ENCODE measurements at regions of chr6 and their contacts with region 1.

Region 1: GRCh38 chr6:144582939-144583613 is 297.9 kb downstream of the UTRN start:
- DNase-seq: peak in 8 of 14 experiments; percentile 2 to 81 (median 34)
- ATAC-seq: peak; percentile 84
- H3K4me3 ChIP-seq: peak overlapping the region; percentile 44
- H3K4me3 Mint-ChIP-seq: peak overlapping the region; percentile 82
- H3K27ac ChIP-seq: peak overlapping the region; percentile 9 to 19
- H3K27ac Mint-ChIP-seq: peak overlapping the region; percentile 72
- H3K4me1 ChIP-seq: peaks cover 5% of the 10 kb centered on the region
- H3K4me1 Mint-ChIP-seq: peaks cover 40% of the 10 kb centered on the region
- H3K27me3 ChIP-seq: no peaks in the 10 kb centered on the region
- H3K27me3 Mint-ChIP-seq: no peaks in the 10 kb centered on the region
- CTCF ChIP-seq: no peak

Region 2: GRCh38 chr6:144349690-144350527 is 233.2 kb before region 1 on chr6:
- CTCF ChIA-PET with region 1: no interaction called
- POLR2A ChIA-PET with region 1: no interaction called
- intact Hi-C with region 1: no loop called
- DNase-seq: peak in 4 of 14 experiments; percentile 19 to 71 (median 62)
- ATAC-seq: peak; percentile 65
- H3K4me3 ChIP-seq: peak overlapping the region; percentile 42
- H3K4me3 Mint-ChIP-seq: peak overlapping the region; percentile 85
- H3K27ac ChIP-seq: peak overlapping the region; percentile 81 to 82
- H3K27ac Mint-ChIP-seq: peak overlapping the region; percentile 89
- H3K4me1 ChIP-seq: peaks cover 83% of the 10 kb centered on the region
- H3K4me1 Mint-ChIP-seq: peaks cover 86% of the 10 kb centered on the region
- H3K27me3 ChIP-seq: no peaks in the 10 kb centered on the region
- H3K27me3 Mint-ChIP-seq: no peaks in the 10 kb centered on the region
- CTCF ChIP-seq: no peak

Region 3: GRCh38 chr6:144730088-144730645 is 147.1 kb after region 1 on chr6:
- CTCF ChIA-PET with region 1: no interaction called
- POLR2A ChIA-PET with region 1: no interaction called
- intact Hi-C with region 1: loop called in 1 of 2 experiments (anchors 10 kb)
- DNase-seq: no peak
- ATAC-seq: no peak
- H3K4me3 ChIP-seq: no peak overlapping the region
- H3K4me3 Mint-ChIP-seq: no peak overlapping the region
- H3K27ac ChIP-seq: no peak overlapping the region
- H3K27ac Mint-ChIP-seq: no peak overlapping the region
- H3K4me1 ChIP-seq: no peaks in the 10 kb centered on the region
- H3K4me1 Mint-ChIP-seq: peaks cover 25% of the 10 kb centered on the region
- H3K27me3 ChIP-seq: no peaks in the 10 kb centered on the region
- H3K27me3 Mint-ChIP-seq: no peaks in the 10 kb centered on the region
- CTCF ChIP-seq: no peak

Region 4: GRCh38 chr6:144744720-144745119 is 161.6 kb after region 1 on chr6:
- CTCF ChIA-PET with region 1: no interaction called
- POLR2A ChIA-PET with region 1: no interaction called
- intact Hi-C with region 1: loop called (anchors 10 kb)
- DNase-seq: no peak
- ATAC-seq: no peak
- H3K4me3 ChIP-seq: no peak overlapping the region
- H3K4me3 Mint-ChIP-seq: no peak overlapping the region
- H3K27ac ChIP-seq: no peak overlapping the region
- H3K27ac Mint-ChIP-seq: no peak overlapping the region
- H3K4me1 ChIP-seq: no peaks in the 10 kb centered on the region
- H3K4me1 Mint-ChIP-seq: no peaks in the 10 kb centered on the region
- H3K27me3 ChIP-seq: no peaks in the 10 kb centered on the region
- H3K27me3 Mint-ChIP-seq: no peaks in the 10 kb centered on the region
- CTCF ChIP-seq: no peak

Region 5: DNA sequence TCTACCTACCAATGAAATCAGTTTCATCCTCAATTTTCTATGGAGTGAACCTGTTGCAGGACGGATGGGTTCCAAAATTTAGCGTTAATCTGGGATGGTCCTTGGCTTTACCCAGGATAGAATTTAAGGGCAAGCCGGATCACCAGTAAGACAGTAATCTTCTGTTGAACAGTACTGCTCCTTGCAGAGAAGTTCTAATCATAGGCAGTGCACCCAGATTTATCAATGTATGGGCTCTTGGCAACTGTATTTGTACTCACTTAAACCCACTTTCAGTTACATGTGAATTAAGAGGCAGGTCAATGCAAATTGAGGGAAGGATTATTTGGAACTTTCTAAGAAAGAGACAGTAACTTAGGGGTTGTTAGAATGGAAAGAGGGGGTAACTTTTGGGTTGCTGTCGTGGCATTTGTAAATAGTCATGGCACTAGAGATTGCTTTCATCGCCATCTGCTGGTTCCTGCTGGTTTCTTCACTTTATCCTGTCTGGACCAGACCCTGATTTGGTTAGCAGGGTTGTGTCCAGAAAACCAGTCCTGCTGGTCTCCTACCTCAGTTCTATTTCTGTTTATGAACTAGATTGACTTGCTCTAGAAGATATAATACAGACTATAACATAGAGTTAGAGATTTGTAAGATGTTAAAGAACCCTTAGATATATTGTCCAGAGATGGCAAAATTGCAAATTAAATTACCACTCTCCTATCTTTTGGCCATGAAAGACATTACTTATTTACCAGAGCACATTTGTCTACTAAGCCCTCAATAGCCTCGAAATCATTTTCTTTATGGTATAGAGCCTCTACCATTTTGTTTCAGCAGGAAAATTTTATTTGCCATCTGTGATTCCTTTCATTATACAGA is 348.3 kb after region 1 on chr6:
- CTCF ChIA-PET with region 1: no interaction called
- POLR2A ChIA-PET with region 1: no interaction called
- intact Hi-C with region 1: loop called (anchors 1 to 2 kb)
- DNase-seq: peak in 6 of 14 experiments; percentile 3 to 45 (median 30)
- ATAC-seq: no peak
- H3K4me3 ChIP-seq: no peak overlapping the region
- H3K4me3 Mint-ChIP-seq: no peak overlapping the region
- H3K27ac ChIP-seq: no peak overlapping the region
- H3K27ac Mint-ChIP-seq: no peak overlapping the region
- H3K4me1 ChIP-seq: no peaks in the 10 kb centered on the region
- H3K4me1 Mint-ChIP-seq: no peaks in the 10 kb centered on the region
- H3K27me3 ChIP-seq: peaks cover 0 to 3% of the 10 kb centered on the region in 2 experiments
- H3K27me3 Mint-ChIP-seq: no peaks in the 10 kb centered on the region
- CTCF ChIP-seq: peak; percentile 51

Region 6: DNA sequence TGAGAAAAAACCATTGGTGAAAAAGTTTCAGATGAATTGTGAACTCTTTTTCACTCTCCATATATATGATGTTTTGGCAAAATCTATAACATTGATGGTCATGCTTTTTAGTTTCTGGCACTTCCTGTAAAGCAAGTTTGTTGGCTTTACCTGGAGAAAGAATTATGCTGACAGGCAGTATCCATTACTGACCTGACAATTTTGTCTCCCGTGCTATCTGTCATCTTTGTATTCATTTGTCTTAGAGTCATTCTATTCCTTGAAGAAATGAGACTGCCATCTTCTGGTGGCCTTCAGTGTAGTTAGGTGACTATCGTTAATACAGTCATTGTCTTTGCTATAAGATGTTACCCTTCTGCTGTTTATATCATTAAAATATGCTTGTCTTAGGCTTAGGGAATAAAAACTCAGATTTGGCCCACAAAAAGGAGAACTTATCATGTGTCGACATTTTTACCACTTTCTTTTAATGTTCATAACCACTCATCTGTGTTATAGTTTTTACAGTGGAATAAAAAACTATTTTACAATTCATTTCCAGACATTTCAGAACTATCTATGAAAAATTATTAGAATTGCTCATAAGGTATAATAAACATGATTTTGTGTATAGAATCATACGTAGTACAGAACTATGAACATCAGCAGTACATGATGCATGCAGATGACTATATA is 445.2 kb after region 1 on chr6:
- CTCF ChIA-PET with region 1: no interaction called
- POLR2A ChIA-PET with region 1: no interaction called
- intact Hi-C with region 1: loop called (anchors 2 to 10 kb)
- DNase-seq: peak in 3 of 14 experiments; percentile 29 to 36 (median 30)
- ATAC-seq: peak; percentile 44
- H3K4me3 ChIP-seq: no peak overlapping the region
- H3K4me3 Mint-ChIP-seq: no peak overlapping the region
- H3K27ac ChIP-seq: no peak overlapping the region
- H3K27ac Mint-ChIP-seq: no peak overlapping the region
- H3K4me1 ChIP-seq: no peaks in the 10 kb centered on the region
- H3K4me1 Mint-ChIP-seq: no peaks in the 10 kb centered on the region
- H3K27me3 ChIP-seq: no peaks in the 10 kb centered on the region
- H3K27me3 Mint-ChIP-seq: peaks cover 25% of the 10 kb centered on the region
- CTCF ChIP-seq: peak; percentile 35

Region 7: GRCh38 chr6:145214570-145214969 is 631.5 kb after region 1 on chr6:
- CTCF ChIA-PET with region 1: no interaction called
- POLR2A ChIA-PET with region 1: no interaction called
- intact Hi-C with region 1: loop called in 1 of 2 experiments (anchors 2 kb)
- DNase-seq: peak in 3 of 14 experiments; percentile 23 to 35 (median 27)
- ATAC-seq: no peak
- H3K4me3 ChIP-seq: no peak overlapping the region
- H3K4me3 Mint-ChIP-seq: no peak overlapping the region
- H3K27ac ChIP-seq: no peak overlapping the region
- H3K27ac Mint-ChIP-seq: no peak overlapping the region
- H3K4me1 ChIP-seq: peaks cover 3% of the 10 kb centered on the region
- H3K4me1 Mint-ChIP-seq: peaks cover 8% of the 10 kb centered on the region
- H3K27me3 ChIP-seq: no peaks in the 10 kb centered on the region
- H3K27me3 Mint-ChIP-seq: peaks cover 10% of the 10 kb centered on the region
- CTCF ChIP-seq: peak; percentile 49

Region 8: GRCh38 chr6:145633981-145634627 is 1051.0 kb after region 1 on chr6:
- CTCF ChIA-PET with region 1: no interaction called
- POLR2A ChIA-PET with region 1: no interaction called
- intact Hi-C with region 1: loop called (anchors 2 to 10 kb)
- DNase-seq: peak; percentile 56 to 84 (median 72)
- ATAC-seq: no peak
- H3K4me3 ChIP-seq: no peak overlapping the region
- H3K4me3 Mint-ChIP-seq: no peak overlapping the region
- H3K27ac ChIP-seq: no peak overlapping the region
- H3K27ac Mint-ChIP-seq: no peak overlapping the region
- H3K4me1 ChIP-seq: peaks cover 3% of the 10 kb centered on the region
- H3K4me1 Mint-ChIP-seq: peaks cover 5% of the 10 kb centered on the region
- H3K27me3 ChIP-seq: no peaks in the 10 kb centered on the region
- H3K27me3 Mint-ChIP-seq: no peaks in the 10 kb centered on the region
- CTCF ChIP-seq: peak; percentile 76